ENCODE measurements at regions of chr5 and their contacts with region 1.

Region 1: DNA sequence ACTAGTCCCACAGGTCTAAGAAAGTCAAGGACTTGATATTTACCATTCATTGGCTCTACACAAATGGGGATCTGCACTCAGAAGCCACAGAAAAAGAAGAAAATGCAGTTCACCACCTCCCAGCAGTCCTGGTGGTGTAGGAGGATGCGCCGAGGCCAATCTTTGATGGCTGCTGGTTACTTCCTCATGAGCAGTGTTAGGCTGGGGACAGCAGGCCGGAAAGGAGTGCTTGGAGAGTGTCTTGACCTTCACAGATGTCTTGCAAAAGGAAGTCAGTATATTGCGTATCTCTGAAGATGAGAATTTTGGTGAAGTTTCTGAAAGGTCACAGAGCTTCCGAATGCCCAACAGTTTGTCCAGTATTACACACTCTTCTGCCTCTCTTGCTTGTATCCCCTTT is 597.0 kb downstream of the EBF1 start:
- DNase-seq: peak in 2 of 5 donors; percentile 32 to 45
- ATAC-seq: peak in 2 of 4 donors; percentile 44 to 57
- H3K4me3 ChIP-seq: no peak overlapping the region
- H3K27ac ChIP-seq: peak overlapping the region in 2 of 12 donors; percentile 21 to 22
- H3K4me1 ChIP-seq: peaks cover 0 to 38% (median 7%) of the 10 kb centered on the region in 12 donors
- H3K27me3 ChIP-seq: no peaks in the 10 kb centered on the region
- CTCF ChIP-seq: no peak
- POLR2A ChIP-seq: no peak

Region 2: GRCh38 chr5:158382473-158382872 is 120.2 kb before region 1 on chr5:
- intact Hi-C with region 1: no loop called
- DNase-seq: peak; percentile 43 to 75 (median 67)
- ATAC-seq: peak; percentile 76 to 96 (median 93)
- H3K4me3 ChIP-seq: no peak overlapping the region
- H3K27ac ChIP-seq: peak overlapping the region in 2 of 12 donors; percentile 1 to 64
- H3K4me1 ChIP-seq: peaks cover 0 to 38% (median 3%) of the 10 kb centered on the region in 12 donors
- H3K27me3 ChIP-seq: peaks cover 0 to 4% (median 0%) of the 10 kb centered on the region in 9 donors
- CTCF ChIP-seq: no peak
- POLR2A ChIP-seq: no peak

Region 3: GRCh38 chr5:158431369-158432029 is 71.2 kb before region 1 on chr5:
- intact Hi-C with region 1: loop called in 1 of 10 experiments (anchors 5 kb)
- DNase-seq: peak in 3 of 5 donors; percentile 34 to 54 (median 45)
- ATAC-seq: peak; percentile 74 to 85 (median 84)
- H3K4me3 ChIP-seq: no peak overlapping the region
- H3K27ac ChIP-seq: peak overlapping the region; percentile 37 to 90 (median 65)
- H3K4me1 ChIP-seq: peaks cover 0 to 35% (median 5%) of the 10 kb centered on the region in 12 donors
- H3K27me3 ChIP-seq: no peaks in the 10 kb centered on the region
- CTCF ChIP-seq: no peak
- POLR2A ChIP-seq: no peak